ENCODE measurements at regions of chr3 and their contacts with region 1.

Region 1: GRCh38 chr3:131731709-131732108 is 228.9 kb upstream of the MRPL3 start:
- DNase-seq: peak; percentile 72
- ATAC-seq: peak; percentile 89
- H3K4me3 Mint-ChIP-seq: no peak overlapping the region
- H3K27ac Mint-ChIP-seq: no peak overlapping the region
- H3K4me1 Mint-ChIP-seq: peaks cover 26% of the 10 kb centered on the region
- H3K27me3 Mint-ChIP-seq: peaks cover 21% of the 10 kb centered on the region

Region 2: GRCh38 chr3:131714585-131715220 is 17.0 kb before region 1 on chr3:
- CTCF ChIA-PET with region 1: no interaction called
- POLR2A ChIA-PET with region 1: no interaction called
- intact Hi-C with region 1: loop called in 1 of 2 experiments (anchors 1 kb)
- DNase-seq: peak; percentile 14
- ATAC-seq: peak; percentile 93
- H3K4me3 Mint-ChIP-seq: no peak overlapping the region
- H3K27ac Mint-ChIP-seq: peak overlapping the region; percentile 24
- H3K4me1 Mint-ChIP-seq: peaks cover 8% of the 10 kb centered on the region
- H3K27me3 Mint-ChIP-seq: peaks cover 7% of the 10 kb centered on the region